ENCODE measurements at regions of chr3 and their contacts with region 1.

Region 1: GRCh38 chr3:148943506-148944205 is 47.7 kb upstream of the GYG1 start:
- DNase-seq: peak in 2 of 35 experiments; percentile 4 to 57
- ATAC-seq: peak; percentile 63 to 88 (median 77)
- H3K4me3 ChIP-seq: no peak overlapping the region
- H3K4me3 Mint-ChIP-seq: no peak overlapping the region
- H3K27ac ChIP-seq: no peak overlapping the region
- H3K27ac Mint-ChIP-seq: no peak overlapping the region
- H3K4me1 ChIP-seq: no peaks in the 10 kb centered on the region
- H3K4me1 Mint-ChIP-seq: no peaks in the 10 kb centered on the region
- H3K27me3 ChIP-seq: peaks cover 0 to 3% of the 10 kb centered on the region in 2 experiments
- H3K27me3 Mint-ChIP-seq: peaks cover 0 to 6% of the 10 kb centered on the region in 2 donors

Region 2: GRCh38 chr3:148796793-148797192 is 146.9 kb before region 1 on chr3:
- CTCF ChIA-PET with region 1: no interaction called
- POLR2A ChIA-PET with region 1: no interaction called
- DNase-seq: no peak
- ATAC-seq: no peak
- H3K4me3 ChIP-seq: no peak overlapping the region
- H3K4me3 Mint-ChIP-seq: no peak overlapping the region
- H3K27ac ChIP-seq: no peak overlapping the region
- H3K27ac Mint-ChIP-seq: no peak overlapping the region
- H3K4me1 ChIP-seq: no peaks in the 10 kb centered on the region
- H3K4me1 Mint-ChIP-seq: no peaks in the 10 kb centered on the region
- H3K27me3 ChIP-seq: no peaks in the 10 kb centered on the region
- H3K27me3 Mint-ChIP-seq: peaks cover under 1 to 1% of the 10 kb centered on the region in 2 donors

Region 3: GRCh38 chr3:148861277-148861869 is 82.3 kb before region 1 on chr3:
- CTCF ChIA-PET with region 1: interaction called, 8 to 14 read pairs
- POLR2A ChIA-PET with region 1: no interaction called
- DNase-seq: peak in 1 of 35 experiments; percentile 55
- ATAC-seq: peak in 2 of 4 experiments; percentile 43 to 53
- H3K4me3 ChIP-seq: no peak overlapping the region
- H3K4me3 Mint-ChIP-seq: no peak overlapping the region
- H3K27ac ChIP-seq: no peak overlapping the region
- H3K27ac Mint-ChIP-seq: no peak overlapping the region
- H3K4me1 ChIP-seq: no peaks in the 10 kb centered on the region
- H3K4me1 Mint-ChIP-seq: no peaks in the 10 kb centered on the region
- H3K27me3 ChIP-seq: peaks cover 0 to 3% of the 10 kb centered on the region in 2 experiments
- H3K27me3 Mint-ChIP-seq: peaks cover 9 to 19% of the 10 kb centered on the region in 2 donors

Region 4: GRCh38 chr3:149512209-149512782 is 568.6 kb after region 1 on chr3:
- CTCF ChIA-PET with region 1: no interaction called
- POLR2A ChIA-PET with region 1: no interaction called
- DNase-seq: peak in 7 of 35 experiments; percentile 3 to 48 (median 10)
- ATAC-seq: no peak
- H3K4me3 ChIP-seq: no peak overlapping the region
- H3K4me3 Mint-ChIP-seq: no peak overlapping the region
- H3K27ac ChIP-seq: no peak overlapping the region
- H3K27ac Mint-ChIP-seq: no peak overlapping the region
- H3K4me1 ChIP-seq: no peaks in the 10 kb centered on the region
- H3K4me1 Mint-ChIP-seq: peaks cover 11 to 12% (median 12%) of the 10 kb centered on the region in 3 donors
- H3K27me3 ChIP-seq: peaks cover 0 to 6% of the 10 kb centered on the region in 2 experiments
- H3K27me3 Mint-ChIP-seq: peaks cover 11 to 19% of the 10 kb centered on the region in 2 donors

Measured in T-cell (primary cell).